AG04450 (cell line): ENCODE measurements at regions of chr11 and their contacts with region 1.

Region 1: DNA sequence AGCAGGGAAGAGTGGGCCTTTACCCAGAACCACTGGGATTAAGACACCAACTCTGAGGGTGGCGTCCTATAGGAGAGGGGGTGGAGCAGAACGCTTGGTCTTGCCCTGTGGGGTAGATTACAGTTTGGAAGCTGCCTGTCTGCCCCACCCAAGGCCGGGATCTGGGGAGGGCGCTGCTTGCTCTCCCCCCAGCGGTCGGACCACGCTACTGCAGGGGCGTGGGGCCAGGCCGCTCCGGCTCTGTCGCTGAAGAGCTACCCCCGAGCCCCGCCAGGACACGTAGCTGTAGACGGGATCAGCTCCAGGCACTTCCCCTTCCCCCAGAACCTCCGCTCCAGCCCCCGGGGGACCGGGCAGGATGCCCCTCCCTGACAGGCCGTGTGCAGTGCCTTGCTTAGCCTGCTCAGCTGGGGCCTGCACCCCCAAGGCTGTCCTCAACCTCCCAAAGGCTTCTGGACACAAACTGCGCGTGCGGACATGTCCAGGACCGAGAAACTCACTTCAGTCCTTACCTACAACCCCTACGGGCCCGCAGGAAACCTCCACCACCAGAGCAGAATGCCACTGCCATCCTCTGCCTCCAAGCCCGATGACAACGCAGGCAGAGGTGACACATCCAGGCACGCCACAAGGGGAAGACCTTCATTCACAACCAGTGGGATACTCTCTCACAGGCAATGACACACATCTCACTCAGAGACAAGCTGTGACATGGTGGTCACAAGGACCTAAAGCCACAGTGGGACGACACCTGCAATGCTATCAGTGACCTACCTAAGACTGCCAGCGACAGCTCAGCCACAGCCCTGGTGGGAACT is 3.6 kb downstream of the AHNAK start:
- DNase-seq: no peak
- H3K4me3 ChIP-seq: peak overlapping the region; percentile 98
- H3K27ac ChIP-seq: peak overlapping the region; percentile 39
- H3K27me3 ChIP-seq: no peaks in the 10 kb centered on the region
- CTCF ChIP-seq: peak; percentile 98

Region 2: GRCh38 chr11:62400760-62401159 is 142.2 kb before region 1 on chr11:
- CTCF ChIA-PET with region 1: interaction called, 89 read pairs
- POLR2A ChIA-PET with region 1: interaction called, 19 read pairs
- DNase-seq: peak; percentile 46
- H3K4me3 ChIP-seq: no peak overlapping the region
- H3K27ac ChIP-seq: no peak overlapping the region
- H3K27me3 ChIP-seq: peaks cover 4% of the 10 kb centered on the region
- CTCF ChIP-seq: no peak

Region 3: GRCh38 chr11:62435846-62436660 is 106.9 kb before region 1 on chr11:
- CTCF ChIA-PET with region 1: interaction called, 13 read pairs
- POLR2A ChIA-PET with region 1: no interaction called
- DNase-seq: no peak
- H3K4me3 ChIP-seq: no peak overlapping the region
- H3K27ac ChIP-seq: no peak overlapping the region
- H3K27me3 ChIP-seq: no peaks in the 10 kb centered on the region
- CTCF ChIP-seq: no peak

Region 4: DNA sequence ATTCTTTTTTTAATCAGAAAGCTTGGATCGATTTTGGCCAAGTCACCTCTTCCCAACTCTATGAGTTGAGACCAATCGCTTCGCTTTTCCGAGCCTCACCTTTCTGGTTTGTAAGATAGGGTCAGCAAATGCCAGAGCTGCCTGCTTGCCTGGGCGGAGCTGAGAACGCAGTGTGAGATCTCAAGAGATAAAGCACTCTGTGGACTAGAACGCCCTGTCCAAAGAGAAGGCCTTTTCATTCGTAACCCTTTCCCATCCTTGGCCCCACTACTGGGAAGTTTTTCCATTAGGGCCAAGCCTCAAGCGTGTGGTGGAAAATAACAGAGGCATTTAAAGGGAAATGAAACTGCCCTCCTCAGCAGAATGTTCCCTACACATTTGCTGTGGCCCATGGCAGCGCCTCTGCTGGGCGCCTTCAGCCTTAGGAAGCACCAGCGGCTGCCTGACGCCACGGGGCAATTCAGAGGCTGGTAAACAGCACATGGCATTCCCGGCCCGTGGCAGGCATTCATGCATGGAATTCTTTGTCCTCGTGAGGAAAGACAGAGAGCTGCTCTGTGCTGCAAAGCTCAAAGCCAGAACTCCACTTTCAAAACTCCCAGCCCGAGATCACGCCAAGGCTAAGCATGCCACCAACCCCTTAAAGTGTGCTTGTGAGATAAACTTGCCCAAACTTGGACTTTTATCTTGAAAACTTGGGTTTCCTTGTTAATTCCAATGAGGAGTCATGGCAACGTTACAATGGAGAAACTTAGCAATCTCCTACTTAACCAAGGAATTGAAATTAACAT is 34.5 kb before region 1 on chr11:
- CTCF ChIA-PET with region 1: interaction called, 14 read pairs
- POLR2A ChIA-PET with region 1: interaction called, 3 read pairs
- DNase-seq: no peak
- H3K4me3 ChIP-seq: no peak overlapping the region
- H3K27ac ChIP-seq: peak overlapping the region; percentile 21
- H3K27me3 ChIP-seq: no peaks in the 10 kb centered on the region
- CTCF ChIP-seq: peak; percentile 48

Region 5: DNA sequence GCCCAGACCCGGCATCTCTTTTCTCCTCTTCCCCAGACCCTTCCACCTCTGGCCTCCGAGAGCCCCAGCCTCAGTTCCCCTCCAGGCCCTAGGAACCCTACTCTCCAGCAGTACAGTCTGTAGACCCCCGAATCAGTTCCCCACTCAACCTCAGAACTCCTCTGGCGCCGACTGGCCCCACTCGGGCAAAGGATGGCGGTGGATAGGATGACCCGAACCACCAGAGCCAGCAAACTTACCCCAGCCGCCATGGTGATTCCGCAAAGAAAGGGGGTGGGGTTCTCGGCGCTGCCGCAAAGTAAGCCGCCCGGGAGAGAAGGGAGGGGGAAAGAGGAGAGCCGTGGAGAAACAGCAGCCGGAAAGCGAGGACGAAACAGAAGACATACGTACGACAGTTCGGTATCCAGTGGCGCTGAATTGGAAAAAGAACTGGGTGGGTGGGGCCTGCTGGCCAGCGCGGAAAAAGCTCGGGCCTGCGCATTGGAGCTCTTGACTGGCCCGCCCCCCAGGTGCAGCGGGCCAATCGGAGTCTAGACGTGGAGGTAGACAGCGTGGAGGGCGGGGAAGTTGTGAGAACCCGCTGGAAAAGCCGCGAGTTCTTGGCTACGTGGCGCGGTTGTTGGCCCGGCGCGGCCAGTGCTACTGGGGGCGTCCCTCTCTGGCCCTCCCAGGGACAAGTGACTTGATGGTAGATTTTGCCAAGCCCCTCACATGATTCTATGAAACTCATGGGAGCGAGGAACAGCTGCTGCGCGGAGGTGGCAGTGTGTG is 30.8 kb after region 1 on chr11 and contains the start of gene EEF1G:
- CTCF ChIA-PET with region 1: interaction called, 14 read pairs
- POLR2A ChIA-PET with region 1: interaction called, 9 read pairs
- DNase-seq: peak; percentile 100
- H3K4me3 ChIP-seq: peak within 1 kb of the TSS; percentile 92
- H3K27ac ChIP-seq: peak within 1 kb of the TSS; percentile 98
- H3K27me3 ChIP-seq: no peaks in the 10 kb centered on the region
- CTCF ChIP-seq: no peak
- polyA plus RNA-seq, gene EEF1G: 2,186 and 2,474 TPM in 2 replicates

Region 6: GRCh38 chr11:62855571-62856332 is 312.8 kb after region 1 on chr11:
- CTCF ChIA-PET with region 1: no interaction called
- POLR2A ChIA-PET with region 1: no interaction called
- DNase-seq: peak; percentile 98
- H3K4me3 ChIP-seq: peak overlapping the region; percentile 96
- H3K27ac ChIP-seq: peak overlapping the region; percentile 91
- H3K27me3 ChIP-seq: no peaks in the 10 kb centered on the region
- CTCF ChIP-seq: no peak